Activated CD8-positive, alpha-beta T cell treated with anti-CD3 and anti-CD28 coated beads, Interleukin-2, amount 10 ng/mL, durations not matched to agents 7 days and 5 days (primary cell): ENCODE measurements at regions of chr12 and their contacts with region 1.

Region 1: DNA sequence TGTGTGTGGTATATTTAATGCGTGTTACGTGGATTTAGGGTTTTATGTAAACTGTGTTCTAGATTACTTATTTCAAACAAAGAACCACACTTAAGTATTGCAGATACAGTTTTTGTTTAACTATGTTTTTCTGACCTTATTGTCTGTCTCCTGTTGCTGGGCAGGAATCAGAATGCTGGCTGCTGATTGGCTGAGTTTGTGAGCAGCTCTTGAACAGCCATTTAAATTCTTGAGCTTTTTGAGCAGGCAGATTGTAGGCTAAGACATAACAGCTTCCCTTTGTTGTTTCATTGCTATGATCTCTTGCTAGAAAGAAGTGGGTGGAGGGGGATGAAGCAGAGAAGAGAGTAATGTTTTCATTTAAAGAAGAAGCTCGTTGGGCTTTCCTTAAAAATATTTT is 52.2 kb downstream of the ATF7IP start:
- DNase-seq: peak; percentile 85
- ATAC-seq: peak; percentile 76
- H3K4me3 Mint-ChIP-seq: peak overlapping the region; percentile 72
- H3K27ac Mint-ChIP-seq: peak overlapping the region; percentile 91
- H3K4me1 Mint-ChIP-seq: peaks cover 60% of the 10 kb centered on the region
- H3K27me3 Mint-ChIP-seq: no peaks in the 10 kb centered on the region

Region 2: DNA sequence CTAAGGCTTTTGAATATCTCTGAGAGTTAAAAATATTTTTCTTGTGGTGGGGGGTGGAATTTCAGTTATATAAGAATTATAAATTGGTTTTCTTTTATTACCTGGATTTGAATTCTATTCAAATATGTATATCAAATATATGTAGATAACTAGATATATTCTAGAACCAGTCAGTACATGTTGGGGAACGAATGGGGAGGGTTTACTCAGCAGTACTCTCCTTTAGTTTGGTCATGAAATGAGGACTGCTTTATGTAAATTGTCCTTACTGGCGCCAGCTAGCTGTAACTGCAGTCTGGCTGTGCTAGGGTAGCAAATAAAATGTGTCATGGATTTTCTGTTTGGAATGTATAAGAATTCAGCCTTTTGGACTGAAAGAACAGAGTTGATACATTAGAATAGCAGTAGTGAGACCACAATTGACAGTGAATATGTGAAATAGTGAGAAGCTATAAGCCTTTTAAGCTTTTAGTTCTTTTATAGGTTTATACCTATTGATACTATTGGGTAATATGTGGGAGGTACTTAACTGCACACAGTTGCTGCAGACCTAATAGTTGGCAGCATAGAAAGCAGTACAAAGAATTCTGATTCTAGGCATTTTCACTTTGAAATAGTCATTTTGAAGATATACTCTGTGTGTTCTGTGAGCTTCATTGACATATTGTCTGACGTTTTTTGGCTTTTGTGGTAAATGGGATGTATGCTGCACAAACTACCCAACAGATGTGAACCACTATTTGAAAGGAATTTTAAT is 23.2 kb before region 1 on chr12:
- CTCF ChIA-PET with region 1: interaction called, 11 read pairs
- POLR2A ChIA-PET with region 1: interaction called, 7 read pairs
- DNase-seq: peak; percentile 67
- ATAC-seq: peak; percentile 78
- H3K4me3 Mint-ChIP-seq: peak overlapping the region; percentile 83
- H3K27ac Mint-ChIP-seq: peak overlapping the region; percentile 92
- H3K4me1 Mint-ChIP-seq: peaks cover 79% of the 10 kb centered on the region
- H3K27me3 Mint-ChIP-seq: no peaks in the 10 kb centered on the region